ENCODE measurements at regions of chr17 and their contacts with region 1.

Region 1: GRCh38 chr17:48636177-48637018 is 10.2 kb upstream of the HOXB9 start:
- DNase-seq: peak; percentile 99
- ATAC-seq: peak; percentile 89
- H3K4me3 Mint-ChIP-seq: peak overlapping the region; percentile 45
- H3K27ac Mint-ChIP-seq: no peak overlapping the region
- H3K4me1 Mint-ChIP-seq: peaks cover 18% of the 10 kb centered on the region
- H3K27me3 Mint-ChIP-seq: peaks cover 100% of the 10 kb centered on the region; the same call in 1 of the 2 replicates
- CTCF ChIP-seq: peak; percentile 62

Region 2: DNA sequence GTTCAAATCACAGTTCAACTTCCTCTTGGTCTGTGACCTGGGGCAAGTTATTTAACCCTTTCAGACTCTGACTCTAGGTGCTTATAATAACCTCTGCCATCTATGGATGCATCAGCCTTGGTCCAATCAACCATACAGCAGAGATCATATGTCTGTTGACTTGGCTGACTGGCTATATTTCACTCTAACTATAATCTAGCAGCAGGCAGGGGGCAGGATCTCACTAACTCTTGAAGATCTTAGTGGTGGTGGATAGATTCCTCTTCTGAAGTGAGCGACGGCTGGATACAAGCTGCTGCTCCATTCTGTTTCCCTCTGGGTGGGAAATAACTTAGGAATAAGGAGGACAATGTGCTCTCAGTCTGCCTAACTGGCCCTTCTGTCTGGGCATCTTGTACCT is 353.0 kb before region 1 on chr17:
- CTCF ChIA-PET with region 1: no interaction called
- POLR2A ChIA-PET with region 1: no interaction called
- DNase-seq: no peak
- ATAC-seq: no peak
- H3K4me3 Mint-ChIP-seq: no peak overlapping the region
- H3K27ac Mint-ChIP-seq: no peak overlapping the region
- H3K4me1 Mint-ChIP-seq: no peaks in the 10 kb centered on the region
- H3K27me3 Mint-ChIP-seq: peaks cover 4% of the 10 kb centered on the region; the same call in 1 of the 2 replicates
- CTCF ChIP-seq: no peak

Region 3: DNA sequence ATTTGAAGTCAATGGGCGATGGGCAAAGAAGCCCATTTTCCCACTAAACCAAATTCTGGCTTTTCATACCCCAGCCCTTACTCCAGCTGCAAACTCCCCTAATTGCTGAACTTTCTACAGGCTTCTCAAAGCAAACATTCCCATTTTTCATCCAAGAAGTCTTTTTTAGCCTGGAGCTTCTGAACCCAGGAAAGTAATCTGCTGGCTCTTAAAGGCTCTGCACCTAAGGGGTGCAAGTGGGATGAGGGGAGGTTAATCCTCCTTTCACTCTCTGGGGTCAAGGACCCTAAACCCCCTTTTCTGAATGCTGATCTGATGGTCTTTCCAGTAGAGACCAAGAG is 27.9 kb before region 1 on chr17:
- CTCF ChIA-PET with region 1: interaction called, 11 read pairs
- POLR2A ChIA-PET with region 1: no interaction called
- DNase-seq: no peak
- ATAC-seq: no peak
- H3K4me3 Mint-ChIP-seq: no peak overlapping the region
- H3K27ac Mint-ChIP-seq: no peak overlapping the region
- H3K4me1 Mint-ChIP-seq: peaks cover 29% of the 10 kb centered on the region
- H3K27me3 Mint-ChIP-seq: peaks cover 100% of the 10 kb centered on the region; the same call in 1 of the 2 replicates
- CTCF ChIP-seq: no peak

Region 4: DNA sequence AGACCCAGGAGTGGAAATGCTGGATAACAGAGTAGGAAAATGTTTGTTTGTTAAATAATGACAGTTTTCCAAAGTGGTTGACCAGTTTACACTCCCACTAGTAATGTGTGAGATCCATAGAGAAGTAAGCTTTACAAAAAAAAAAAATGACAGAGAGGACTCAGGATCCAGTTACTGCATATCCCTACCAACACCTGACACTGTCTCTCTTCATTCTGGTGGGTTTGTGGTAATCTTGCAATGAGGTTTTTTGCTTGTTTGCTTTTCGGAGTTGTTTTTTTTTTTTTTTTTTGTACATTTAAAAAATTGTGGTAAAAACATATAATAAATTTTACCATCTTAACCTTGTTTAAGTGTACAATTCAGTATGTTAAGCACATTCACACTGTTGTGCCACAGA is 13.3 kb after region 1 on chr17:
- CTCF ChIA-PET with region 1: interaction called, 13 read pairs
- POLR2A ChIA-PET with region 1: interaction called, 3 read pairs
- DNase-seq: no peak
- ATAC-seq: no peak
- H3K4me3 Mint-ChIP-seq: no peak overlapping the region
- H3K27ac Mint-ChIP-seq: no peak overlapping the region
- H3K4me1 Mint-ChIP-seq: peaks cover 14% of the 10 kb centered on the region
- H3K27me3 Mint-ChIP-seq: peaks cover 87% of the 10 kb centered on the region
- CTCF ChIP-seq: no peak

Region 5: DNA sequence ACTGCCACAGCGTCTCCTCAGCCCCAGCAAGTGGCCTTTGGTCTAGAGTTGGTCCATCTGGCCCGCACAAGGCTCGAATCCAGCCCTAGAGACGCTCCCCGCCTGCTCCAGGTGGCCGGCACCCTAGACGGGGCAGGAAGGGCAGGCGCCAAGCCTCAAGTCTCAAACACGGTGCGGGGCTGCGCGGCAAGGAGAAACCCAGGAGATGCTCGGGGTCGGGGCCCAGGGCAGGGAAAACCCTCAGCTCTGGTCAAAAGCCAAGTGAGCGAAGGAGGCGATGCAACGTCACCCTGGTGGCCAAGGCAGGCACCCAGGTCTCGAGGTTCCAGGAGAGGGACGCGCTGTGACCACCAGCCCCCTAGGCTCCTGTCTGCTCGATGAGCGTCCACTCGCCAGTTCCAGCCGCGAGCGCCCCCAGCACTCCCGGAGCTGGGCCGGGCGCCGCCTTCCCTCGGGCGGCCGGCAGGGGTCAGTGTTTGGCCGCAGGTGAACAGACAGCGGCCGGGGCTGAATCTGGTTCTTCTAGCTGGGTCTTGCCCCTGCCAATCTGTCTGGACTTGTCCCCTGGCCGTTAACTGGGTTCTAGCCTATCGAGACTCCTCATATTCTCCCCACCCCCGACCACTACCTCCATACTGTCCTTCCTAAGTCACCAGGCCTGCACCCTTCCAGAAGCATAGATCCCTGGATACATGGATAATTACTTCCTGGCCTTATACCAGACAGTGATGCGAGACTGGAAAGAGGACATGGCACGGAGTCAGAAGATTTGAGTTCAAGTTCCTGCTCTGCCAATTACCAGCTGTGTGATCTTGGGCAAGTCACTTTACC is 42.0 kb after region 1 on chr17:
- CTCF ChIA-PET with region 1: interaction called, 22 read pairs
- POLR2A ChIA-PET with region 1: no interaction called
- DNase-seq: peak; percentile 89
- ATAC-seq: peak; percentile 95
- H3K4me3 Mint-ChIP-seq: peak overlapping the region; percentile 64
- H3K27ac Mint-ChIP-seq: no peak overlapping the region
- H3K4me1 Mint-ChIP-seq: peaks cover 7% of the 10 kb centered on the region
- H3K27me3 Mint-ChIP-seq: peaks cover 37% of the 10 kb centered on the region
- CTCF ChIP-seq: peak; percentile 95

Region 6: GRCh38 chr17:48738803-48739526 is 102.6 kb after region 1 on chr17:
- CTCF ChIA-PET with region 1: interaction called, 23 read pairs
- POLR2A ChIA-PET with region 1: no interaction called
- DNase-seq: no peak
- ATAC-seq: peak; percentile 68
- H3K4me3 Mint-ChIP-seq: peak overlapping the region; percentile 56
- H3K27ac Mint-ChIP-seq: no peak overlapping the region
- H3K4me1 Mint-ChIP-seq: peaks cover 15% of the 10 kb centered on the region
- H3K27me3 Mint-ChIP-seq: peaks cover 100% of the 10 kb centered on the region
- CTCF ChIP-seq: no peak

Measured in WTC11 (cell line).